Testis (tissue), 5 donors: ENCODE measurements at regions of chr17 and their contacts with region 1.

Region 1: DNA sequence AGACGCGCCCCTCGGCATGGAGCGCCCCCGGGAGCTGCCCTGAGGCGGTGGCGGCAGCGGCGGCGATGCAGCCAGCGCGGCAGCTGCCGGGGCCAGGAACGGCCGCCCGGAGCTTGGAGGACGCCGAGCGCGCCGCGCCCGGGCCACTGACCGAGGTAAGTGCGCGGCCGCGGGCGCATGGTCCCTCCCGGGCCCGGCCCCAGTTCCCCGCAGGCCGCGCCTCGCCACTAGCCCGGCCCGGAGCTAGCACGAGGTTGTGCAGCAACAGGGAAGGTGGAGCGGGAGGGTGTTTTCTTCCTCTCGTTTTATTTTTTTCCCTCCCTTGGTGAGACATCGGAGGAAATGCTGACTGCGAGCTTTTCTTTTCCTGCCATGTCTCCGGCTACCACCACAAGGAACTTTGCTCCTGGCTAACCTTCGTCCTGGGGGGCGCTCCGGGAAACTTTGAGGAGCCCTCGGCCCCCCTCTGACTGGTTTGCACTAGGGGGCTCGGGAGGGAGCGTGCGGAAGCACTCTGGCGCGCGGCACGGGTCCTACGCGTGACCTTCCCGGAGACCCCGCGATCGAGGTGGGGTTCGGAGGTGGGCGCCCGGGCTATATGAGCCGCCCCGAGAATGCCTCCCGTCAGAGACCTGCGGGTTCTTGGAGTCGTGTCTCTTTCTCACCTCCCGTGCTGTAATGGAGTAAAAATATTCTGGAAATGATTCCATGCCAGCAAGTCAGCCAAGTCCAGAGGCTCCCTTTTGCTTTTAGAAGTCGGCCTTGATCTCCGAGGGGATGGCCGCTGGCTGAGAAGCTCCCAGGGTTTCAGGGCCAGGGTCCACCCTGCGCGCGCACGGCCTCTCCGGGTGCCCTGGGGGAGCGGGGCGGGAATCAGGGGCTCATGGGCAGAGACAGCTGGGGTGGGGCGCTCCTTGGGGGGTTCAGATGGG is 868 bp downstream of the KCNJ12 start:
- DNase-seq: peak; percentile 35
- H3K4me3 ChIP-seq: peak overlapping the region; percentile 55 to 60
- H3K27ac ChIP-seq: peak overlapping the region; percentile 44 to 50
- H3K4me1 ChIP-seq: peaks cover 8% of the 10 kb centered on the region
- H3K27me3 ChIP-seq: no peaks in the 10 kb centered on the region
- CTCF ChIP-seq: no peak
- POLR2A ChIP-seq: no peak

Region 2: DNA sequence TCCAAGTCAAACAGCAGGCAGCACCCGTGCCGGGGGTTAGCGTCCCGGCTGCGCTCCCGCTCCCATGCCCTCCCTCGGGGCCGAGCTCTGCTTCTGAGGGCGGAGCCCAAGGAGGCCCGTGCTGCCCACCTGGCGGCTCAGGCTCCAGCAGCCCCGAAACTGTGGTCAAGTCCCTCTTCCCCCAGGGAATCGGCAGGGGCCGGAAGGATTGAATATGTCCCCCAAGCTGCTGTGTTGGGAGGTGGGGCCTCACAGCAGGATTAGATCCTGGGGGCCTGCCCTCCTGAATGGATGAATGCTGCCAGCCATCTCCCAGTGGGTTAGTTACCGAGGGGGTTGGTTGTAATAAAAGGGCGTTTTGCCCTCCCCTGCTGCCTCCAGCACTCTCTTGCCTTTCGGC is 58.6 kb before region 1 on chr17:
- intact Hi-C with region 1: no loop called
- DNase-seq: peak; percentile 12
- H3K4me3 ChIP-seq: no peak overlapping the region
- H3K27ac ChIP-seq: no peak overlapping the region
- H3K4me1 ChIP-seq: no peaks in the 10 kb centered on the region
- H3K27me3 ChIP-seq: no peaks in the 10 kb centered on the region
- CTCF ChIP-seq: no peak
- POLR2A ChIP-seq: no peak

Region 3: DNA sequence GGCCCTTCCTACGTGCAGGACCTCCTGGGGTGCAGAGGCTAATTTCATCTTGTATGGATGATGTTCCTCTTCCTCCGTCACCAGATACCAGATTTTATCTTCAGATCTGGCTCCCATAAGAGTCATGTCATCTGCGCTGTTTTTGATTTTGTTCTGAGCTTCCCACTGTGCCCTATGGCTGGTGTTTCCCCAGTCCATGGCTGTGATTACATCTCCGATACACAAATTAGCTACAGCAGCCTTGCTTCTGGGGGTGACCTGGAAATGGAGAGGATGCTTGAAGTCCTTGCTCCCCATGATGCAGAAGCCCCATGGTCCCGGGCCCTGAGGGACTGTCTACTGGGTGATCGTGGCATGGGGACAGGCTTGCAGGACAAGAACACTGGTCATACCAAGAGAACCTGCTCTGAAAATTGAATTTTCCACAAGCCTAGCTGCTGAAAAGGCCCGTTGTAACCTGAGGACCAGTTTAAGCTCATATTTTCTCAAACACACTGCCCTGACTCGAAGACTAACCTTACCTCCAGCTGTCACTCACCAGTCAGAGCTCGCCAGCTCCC is 68.1 kb after region 1 on chr17:
- intact Hi-C with region 1: loop called (anchors 10 kb)
- DNase-seq: no peak
- H3K4me3 ChIP-seq: no peak overlapping the region
- H3K27ac ChIP-seq: no peak overlapping the region
- H3K4me1 ChIP-seq: no peaks in the 10 kb centered on the region
- H3K27me3 ChIP-seq: no peaks in the 10 kb centered on the region
- CTCF ChIP-seq: no peak
- POLR2A ChIP-seq: no peak